SK-N-SH (cell line): ENCODE measurements at regions of chr18 and their contacts with region 1.

Region 1: DNA sequence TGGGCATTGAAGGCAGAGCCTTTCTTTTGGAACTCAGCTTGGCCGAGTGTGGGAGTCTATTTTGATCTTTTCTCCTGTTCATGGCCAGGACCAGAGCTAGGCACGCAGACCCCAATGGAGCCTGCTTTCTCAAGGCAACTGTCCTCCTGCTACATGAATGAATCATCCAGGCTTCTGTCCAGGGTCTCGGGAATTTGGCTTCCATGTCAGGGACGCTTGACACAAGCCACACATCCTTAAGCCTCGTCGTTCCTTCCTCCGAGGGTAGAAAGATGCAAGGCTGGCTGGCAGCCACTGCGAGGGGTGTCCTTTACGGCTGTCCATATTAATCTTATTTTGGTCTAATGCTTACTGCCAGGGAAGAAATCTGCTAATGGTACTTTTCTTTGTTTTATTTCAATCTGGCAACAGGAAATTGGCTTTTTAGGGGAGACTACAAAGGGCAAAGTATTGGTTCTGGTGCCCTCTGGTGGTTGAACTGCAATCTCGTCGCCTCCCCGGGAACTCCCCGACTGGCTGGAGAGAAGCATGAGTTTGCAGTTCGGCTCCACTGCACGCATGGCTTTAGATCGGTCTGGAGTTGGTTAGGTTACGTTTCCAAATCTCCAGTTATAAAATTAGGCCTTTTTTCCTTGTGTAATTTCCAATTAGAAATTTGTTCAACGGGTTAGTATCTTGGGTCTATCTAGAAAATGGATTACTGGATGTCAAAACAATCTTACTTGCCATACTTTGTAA is 135.2 kb downstream of the ALPK2 start:
- DNase-seq: peak; percentile 74
- H3K4me3 ChIP-seq: peak overlapping the region in 1 of 2 experiments; percentile 13; a peak in 1 of 4 replicates
- H3K27ac ChIP-seq: no peak overlapping the region
- H3K4me1 ChIP-seq: peaks cover 0 to 4% of the 10 kb centered on the region in 2 experiments; a peak in 1 of 4 replicates
- H3K27me3 ChIP-seq: no peaks in the 10 kb centered on the region
- CTCF ChIP-seq: peak; percentile 94
- EP300 ChIP-seq: no peak
- RAD21 ChIP-seq: peak; percentile 88

Region 2: DNA sequence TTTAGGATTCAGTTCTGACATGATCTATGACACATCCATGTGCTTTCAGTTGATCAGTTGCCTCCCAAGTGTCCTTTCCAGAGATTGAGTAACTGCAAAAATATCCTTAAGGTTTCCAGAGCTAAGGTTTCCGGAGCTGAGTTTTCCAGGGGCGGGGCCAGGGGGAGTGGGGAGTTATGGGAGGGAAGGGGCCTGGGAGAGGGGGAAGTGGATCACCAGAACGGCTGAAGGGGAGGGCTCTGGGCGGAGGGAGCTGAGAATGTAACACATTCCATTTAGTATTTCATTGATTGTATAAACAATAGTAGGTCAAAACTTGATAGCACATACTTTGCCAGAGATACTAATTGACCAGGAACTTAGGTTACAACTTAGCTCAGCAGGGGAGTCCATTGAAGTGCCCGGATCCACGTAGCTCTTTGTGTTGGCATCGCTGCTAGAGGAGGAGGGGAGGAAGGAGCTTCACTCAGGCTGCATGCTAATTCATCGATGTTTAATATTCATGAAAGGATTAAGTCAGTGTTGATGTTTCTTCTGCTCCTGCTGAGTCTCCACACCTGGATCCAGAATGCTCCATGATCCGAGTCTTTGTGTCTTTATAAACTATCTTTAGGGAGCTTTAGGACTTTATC is 154.6 kb before region 1 on chr18:
- CTCF ChIA-PET with region 1: interaction called, 13 read pairs
- POLR2A ChIA-PET with region 1: no interaction called
- DNase-seq: no peak
- H3K4me3 ChIP-seq: no peak overlapping the region
- H3K27ac ChIP-seq: no peak overlapping the region
- H3K4me1 ChIP-seq: no peaks in the 10 kb centered on the region; a peak in 2 of 4 replicates
- H3K27me3 ChIP-seq: no peaks in the 10 kb centered on the region
- CTCF ChIP-seq: no peak
- EP300 ChIP-seq: no peak
- RAD21 ChIP-seq: no peak

Region 3: GRCh38 chr18:58515175-58515775 is 21.6 kb after region 1 on chr18:
- CTCF ChIA-PET with region 1: interaction called, 13 read pairs
- POLR2A ChIA-PET with region 1: no interaction called
- DNase-seq: no peak
- H3K4me3 ChIP-seq: no peak overlapping the region
- H3K27ac ChIP-seq: no peak overlapping the region
- H3K4me1 ChIP-seq: no peaks in the 10 kb centered on the region; a peak in 1 of 4 replicates
- H3K27me3 ChIP-seq: no peaks in the 10 kb centered on the region
- CTCF ChIP-seq: no peak
- EP300 ChIP-seq: no peak
- RAD21 ChIP-seq: no peak